GM12878 (cell line): ENCODE measurements at regions of chr10 and their contacts with region 1.

Region 1: DNA sequence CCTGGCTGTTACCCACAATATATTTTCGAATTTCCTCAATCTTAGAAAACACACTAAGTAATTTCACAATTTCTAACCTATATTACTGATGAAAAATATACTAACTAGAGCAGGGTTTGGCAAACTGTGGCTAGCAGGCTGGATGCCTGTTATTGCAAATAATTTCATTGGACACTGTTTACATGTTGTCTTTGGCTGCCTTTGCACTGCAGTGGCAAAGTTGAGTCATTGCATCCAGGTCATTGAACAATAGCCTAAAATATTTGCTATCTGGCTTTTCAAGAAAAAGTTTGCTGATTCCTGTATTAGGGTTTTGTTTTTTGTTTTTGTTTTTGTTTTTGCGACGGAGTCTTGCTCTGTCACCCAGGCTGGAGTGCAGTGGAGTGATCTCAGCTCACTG is 47.2 kb downstream of the KIF11 start:
- DNase-seq: no peak
- ATAC-seq: no peak
- H3K4me3 ChIP-seq: no peak overlapping the region
- H3K27ac ChIP-seq: no peak overlapping the region
- H3K4me1 ChIP-seq: no peaks in the 10 kb centered on the region
- H3K27me3 ChIP-seq: no peaks in the 10 kb centered on the region
- CTCF ChIP-seq: no peak
- EP300 ChIP-seq: no peak
- POLR2A ChIP-seq: no peak
- RAD21 ChIP-seq: no peak

Region 2: DNA sequence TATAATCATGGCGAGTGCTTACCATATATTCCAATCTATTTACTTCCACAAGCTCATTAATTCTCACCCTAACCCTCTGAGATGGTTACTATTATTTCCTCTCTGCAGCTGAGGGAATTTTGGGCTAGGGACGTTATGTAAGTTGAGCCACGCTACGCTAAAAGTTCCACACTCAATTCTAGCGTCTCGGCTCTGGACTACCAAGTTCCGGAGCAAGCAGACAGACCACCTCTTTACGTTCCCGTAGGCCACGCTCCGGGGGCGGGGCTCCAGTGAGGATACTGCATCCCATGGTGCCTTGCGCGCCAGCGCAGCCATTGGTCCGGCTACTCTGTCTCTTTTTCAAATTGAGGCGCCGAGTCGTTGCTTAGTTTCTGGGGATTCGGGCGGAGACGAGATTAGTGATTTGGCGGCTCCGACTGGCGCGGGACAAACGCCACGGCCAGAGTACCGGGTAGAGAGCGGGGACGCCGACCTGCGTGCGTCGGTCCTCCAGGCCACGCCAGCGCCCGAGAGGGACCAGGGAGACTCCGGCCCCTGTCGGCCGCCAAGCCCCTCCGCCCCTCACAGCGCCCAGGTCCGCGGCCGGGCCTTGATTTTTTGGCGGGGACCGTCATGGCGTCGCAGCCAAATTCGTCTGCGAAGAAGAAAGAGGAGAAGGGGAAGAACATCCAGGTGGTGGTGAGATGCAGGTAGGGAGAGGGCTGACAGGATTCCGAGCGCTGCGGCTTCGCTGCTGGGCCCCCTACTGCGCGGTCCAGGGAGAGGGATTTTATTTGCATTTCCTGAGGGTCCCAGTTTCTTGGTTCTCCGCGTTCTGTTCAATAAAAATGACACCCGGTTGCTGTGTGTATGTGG is 47.1 kb before region 1 on chr10 and contains the start of gene KIF11:
- CTCF ChIA-PET with region 1: interaction called, 13 read pairs
- POLR2A ChIA-PET with region 1: no interaction called
- RAD21 ChIA-PET with region 1: interaction called, 3 read pairs
- SMC1A ChIA-PET with region 1: interaction called, 5 read pairs
- in situ Hi-C with region 1: no loop called
- intact Hi-C with region 1: no loop called
- DNase-seq: peak; percentile 88
- ATAC-seq: peak; percentile 81
- H3K4me3 ChIP-seq: peak within 1 kb of the TSS; percentile 88
- H3K27ac ChIP-seq: peak within 1 kb of the TSS; percentile 95
- H3K4me1 ChIP-seq: peaks cover 7% of the 10 kb centered on the region
- H3K27me3 ChIP-seq: no peaks in the 10 kb centered on the region
- CTCF ChIP-seq: no peak
- EP300 ChIP-seq: peak in 1 of 2 experiments; percentile 10; a peak in 1 of 4 replicates
- POLR2A ChIP-seq: peak; percentile 88
- RAD21 ChIP-seq: no peak
- polyA plus RNA-seq, gene KIF11: 14.1 to 17.9 TPM